Vagina (tissue), 2 donors: ENCODE measurements at regions of chr3 and their contacts with region 1.

Region 1: GRCh38 chr3:45205126-45205525 is 21.0 kb downstream of the TMEM158 start:
- DNase-seq: no peak
- H3K4me3 ChIP-seq: no peak overlapping the region
- H3K27ac ChIP-seq: no peak overlapping the region
- H3K4me1 ChIP-seq: peaks cover 9% of the 10 kb centered on the region
- H3K27me3 ChIP-seq: no peaks in the 10 kb centered on the region
- CTCF ChIP-seq: no peak
- POLR2A ChIP-seq: no peak

Region 2: DNA sequence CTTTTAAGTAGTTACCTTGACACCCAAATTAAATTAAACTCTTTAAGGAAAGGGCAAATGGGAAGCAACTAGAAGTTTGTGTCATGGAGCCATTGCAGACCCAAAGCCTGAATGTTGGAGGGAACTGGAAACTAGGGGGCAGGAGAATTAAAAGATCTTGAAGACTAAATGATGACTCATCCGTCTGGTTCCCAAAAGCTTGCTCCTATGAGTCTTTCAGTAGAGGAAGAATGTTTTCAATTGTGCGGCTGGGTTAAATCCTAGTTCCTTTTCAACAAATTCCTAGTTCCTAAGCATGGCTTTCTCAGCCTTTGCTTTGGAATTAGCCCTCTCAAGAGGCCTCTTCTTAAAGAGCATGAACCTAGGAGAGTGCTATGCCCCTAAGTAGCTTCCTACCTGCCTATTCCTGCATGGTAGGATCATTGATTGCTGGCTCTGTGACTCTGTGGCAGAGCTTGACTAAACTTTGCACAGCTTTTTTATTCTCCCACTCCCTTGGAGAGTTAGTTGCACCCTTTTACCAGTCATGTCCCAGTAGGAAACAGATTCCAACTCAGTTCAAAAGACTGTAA is 161.3 kb before region 1 on chr3:
- intact Hi-C with region 1: loop called (anchors 5 kb)
- DNase-seq: no peak
- H3K4me3 ChIP-seq: no peak overlapping the region
- H3K27ac ChIP-seq: no peak overlapping the region
- H3K4me1 ChIP-seq: peaks cover 6% of the 10 kb centered on the region
- H3K27me3 ChIP-seq: no peaks in the 10 kb centered on the region
- CTCF ChIP-seq: peak in 1 of 3 experiments; percentile 33
- POLR2A ChIP-seq: no peak